ENCODE measurements at regions of chr17 and their contacts with region 1.

Region 1: GRCh38 chr17:63425482-63425881 is 20.6 kb downstream of the CYB561 start:
- DNase-seq: peak; percentile 58 to 67
- ATAC-seq: peak; percentile 79 to 97
- H3K4me3 ChIP-seq: no peak overlapping the region
- H3K27ac ChIP-seq: no peak overlapping the region
- H3K4me1 ChIP-seq: peaks cover 0 to 4% of the 10 kb centered on the region in 2 donors
- H3K27me3 ChIP-seq: no peaks in the 10 kb centered on the region
- CTCF ChIP-seq: peak; percentile 82 to 98 (median 91)
- POLR2A ChIP-seq: no peak

Region 2: GRCh38 chr17:61946359-61946758 is 1479.1 kb before region 1 on chr17:
- in situ Hi-C with region 1: no loop called
- intact Hi-C with region 1: no loop called
- DNase-seq: no peak
- ATAC-seq: no peak
- H3K4me3 ChIP-seq: no peak overlapping the region
- H3K27ac ChIP-seq: no peak overlapping the region
- H3K4me1 ChIP-seq: peaks cover 0 to 7% of the 10 kb centered on the region in 2 donors
- H3K27me3 ChIP-seq: no peaks in the 10 kb centered on the region
- CTCF ChIP-seq: no peak
- POLR2A ChIP-seq: no peak

Region 3: GRCh38 chr17:62808196-62808930 is 617.1 kb before region 1 on chr17 and contains the start of gene MARCHF10:
- in situ Hi-C with region 1: no loop called
- intact Hi-C with region 1: no loop called
- DNase-seq: no peak
- ATAC-seq: no peak
- H3K4me3 ChIP-seq: no peak within 1 kb of the TSS
- H3K27ac ChIP-seq: no peak within 1 kb of the TSS
- H3K4me1 ChIP-seq: no peaks in the 10 kb centered on the region
- H3K27me3 ChIP-seq: peaks cover 7 to 18% (median 13%) of the 10 kb centered on the region in 3 donors
- CTCF ChIP-seq: no peak
- POLR2A ChIP-seq: no peak
- total RNA-seq, gene MARCHF10: not detected

Region 4: GRCh38 chr17:63222655-63223054 is 202.8 kb before region 1 on chr17:
- in situ Hi-C with region 1: no loop called
- intact Hi-C with region 1: no loop called
- DNase-seq: no peak
- ATAC-seq: no peak
- H3K4me3 ChIP-seq: no peak overlapping the region
- H3K27ac ChIP-seq: no peak overlapping the region
- H3K4me1 ChIP-seq: no peaks in the 10 kb centered on the region
- H3K27me3 ChIP-seq: no peaks in the 10 kb centered on the region
- CTCF ChIP-seq: no peak
- POLR2A ChIP-seq: no peak

Region 5: DNA sequence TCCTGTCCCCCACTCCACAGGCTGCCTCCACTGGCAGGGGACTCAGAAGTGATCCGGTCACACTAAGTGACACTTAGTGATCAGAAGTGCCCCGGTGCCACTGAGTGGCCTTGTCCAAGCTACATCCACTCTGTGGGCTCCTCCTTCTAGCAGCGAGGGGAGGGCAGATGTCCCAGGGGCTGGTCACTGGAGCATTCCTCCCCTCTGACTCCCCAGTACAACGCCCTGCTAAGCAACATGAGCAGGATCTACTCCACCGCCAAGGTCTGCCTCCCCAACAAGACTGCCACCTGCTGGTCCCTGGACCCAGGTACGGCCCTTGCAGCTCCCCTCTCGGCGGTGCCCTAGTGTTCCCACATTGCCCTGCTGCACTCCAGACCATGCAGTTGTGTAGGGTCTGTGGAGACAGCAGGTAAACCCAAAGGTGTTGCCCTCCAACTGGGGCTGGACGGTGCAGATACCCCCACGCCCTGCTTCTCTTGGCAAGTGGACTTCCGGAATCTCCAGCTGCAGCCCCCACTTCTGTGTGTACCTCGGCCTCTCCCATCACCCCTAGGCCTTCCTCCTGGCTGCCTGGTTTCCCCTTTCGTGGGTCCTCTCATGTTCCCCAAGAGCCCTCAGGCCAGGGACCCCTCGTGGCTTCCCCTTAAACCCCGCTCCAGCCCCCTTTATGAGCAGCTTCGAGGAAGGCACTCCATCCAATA is 53.5 kb after region 1 on chr17:
- in situ Hi-C with region 1: loop called in 3 of 4 experiments (anchors 10 kb)
- intact Hi-C with region 1: loop called (anchors 1 kb)
- DNase-seq: peak; percentile 47 to 56
- ATAC-seq: peak; percentile 63 to 64
- H3K4me3 ChIP-seq: no peak overlapping the region
- H3K27ac ChIP-seq: no peak overlapping the region
- H3K4me1 ChIP-seq: peaks cover 5 to 15% of the 10 kb centered on the region in 2 donors
- H3K27me3 ChIP-seq: peaks cover 11 to 32% (median 18%) of the 10 kb centered on the region in 3 donors
- CTCF ChIP-seq: peak; percentile 39 to 67 (median 64)
- POLR2A ChIP-seq: no peak

Region 6: GRCh38 chr17:63549946-63550807 is 124.7 kb after region 1 on chr17 and contains the start of gene DCAF7:
- in situ Hi-C with region 1: no loop called
- intact Hi-C with region 1: loop called (anchors 10 kb)
- DNase-seq: peak; percentile 100
- ATAC-seq: peak; percentile 98 to 99
- H3K4me3 ChIP-seq: peak within 1 kb of the TSS; percentile 91 to 97 (median 93)
- H3K27ac ChIP-seq: peak within 1 kb of the TSS; percentile 87 to 96 (median 94)
- H3K4me1 ChIP-seq: peaks cover 37 to 43% of the 10 kb centered on the region in 2 donors
- H3K27me3 ChIP-seq: no peaks in the 10 kb centered on the region
- CTCF ChIP-seq: no peak
- POLR2A ChIP-seq: peak; percentile 66 to 68
- total RNA-seq, gene DCAF7: 16.5 to 34.1 (median 22.0) TPM

Region 7: DNA sequence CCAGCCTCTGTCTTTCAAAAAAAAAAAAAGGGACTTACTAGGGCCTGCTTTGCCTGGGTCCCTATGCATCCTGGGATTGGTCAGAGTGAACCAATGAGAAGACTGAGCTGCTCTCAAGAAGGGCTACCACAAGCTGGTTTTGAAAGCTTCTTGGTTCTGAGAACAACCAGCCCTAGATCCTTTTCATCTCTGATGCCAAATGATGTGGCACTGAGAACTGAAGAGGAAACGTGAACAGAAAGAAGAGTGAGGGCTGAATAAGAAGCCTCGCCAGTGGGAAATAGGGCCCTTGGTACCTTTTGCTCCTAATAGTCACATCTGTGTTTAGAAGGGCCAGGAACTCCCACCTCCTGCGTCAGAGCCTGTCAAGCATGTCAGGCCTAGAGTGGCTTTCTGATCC is 185.9 kb after region 1 on chr17:
- in situ Hi-C with region 1: loop called (anchors 5 kb)
- intact Hi-C with region 1: loop called (anchors 1 kb)
- DNase-seq: no peak
- ATAC-seq: no peak
- H3K4me3 ChIP-seq: no peak overlapping the region
- H3K27ac ChIP-seq: no peak overlapping the region
- H3K4me1 ChIP-seq: no peaks in the 10 kb centered on the region
- H3K27me3 ChIP-seq: no peaks in the 10 kb centered on the region
- CTCF ChIP-seq: no peak
- POLR2A ChIP-seq: no peak

Region 8: DNA sequence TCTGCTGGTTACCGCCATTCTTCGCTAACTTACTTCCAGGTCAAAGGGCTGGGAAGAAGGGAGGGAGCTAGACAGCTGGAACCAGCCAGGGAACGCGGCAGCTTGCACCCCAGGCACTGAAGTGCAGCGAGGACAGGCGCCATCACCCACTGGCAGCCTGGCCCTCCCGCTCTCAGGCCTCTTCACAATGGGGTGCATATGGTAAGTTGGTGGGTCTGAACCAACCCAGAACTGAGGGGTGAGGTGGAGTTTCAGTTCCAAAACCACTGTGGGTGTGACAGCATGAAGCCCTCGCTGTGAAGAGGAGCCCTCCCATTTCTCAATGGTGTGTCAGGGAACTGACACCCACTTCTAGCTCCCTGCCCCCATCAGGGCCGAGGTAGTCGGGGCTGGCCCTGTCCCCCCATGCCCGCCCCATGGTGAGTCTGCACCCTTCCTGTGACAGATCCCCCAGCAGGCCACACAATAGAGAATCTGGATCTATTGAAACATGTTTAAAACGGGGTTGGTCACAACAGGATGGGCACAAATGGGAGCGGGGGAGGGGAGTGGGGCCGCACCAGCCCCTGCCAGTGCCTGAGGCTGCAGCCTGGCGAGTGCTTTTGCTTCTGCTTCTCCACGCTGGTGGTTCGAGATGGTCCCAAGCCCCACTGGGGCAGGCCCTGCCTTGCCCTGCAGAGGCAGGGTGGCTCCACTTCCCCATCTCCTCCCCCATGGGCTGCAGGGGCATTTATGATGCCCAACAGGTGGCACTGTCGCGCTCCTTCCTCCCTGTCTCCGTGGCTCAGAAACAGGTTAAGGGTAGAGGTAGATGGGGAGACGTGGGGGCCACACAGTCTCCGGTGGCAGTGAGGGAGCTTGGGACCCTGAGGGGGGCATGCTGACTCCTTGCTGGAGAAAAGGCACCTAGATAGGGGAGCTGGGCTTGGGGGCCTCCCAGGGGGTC is 272.1 kb after region 1 on chr17:
- in situ Hi-C with region 1: loop called in 1 of 4 experiments (anchors 25 kb)
- intact Hi-C with region 1: loop called (anchors 5 kb)
- DNase-seq: peak in 1 of 2 donors; percentile 52
- ATAC-seq: peak in 1 of 2 donors; percentile 47
- H3K4me3 ChIP-seq: no peak overlapping the region
- H3K27ac ChIP-seq: no peak overlapping the region
- H3K4me1 ChIP-seq: peaks cover 17 to 24% of the 10 kb centered on the region in 2 donors
- H3K27me3 ChIP-seq: peaks cover 5 to 20% (median 10%) of the 10 kb centered on the region in 3 donors
- CTCF ChIP-seq: peak in 4 of 5 experiments; percentile 29 to 62 (median 47)
- POLR2A ChIP-seq: no peak

Region 9: GRCh38 chr17:63859257-63859656 is 433.8 kb after region 1 on chr17:
- in situ Hi-C with region 1: no loop called
- intact Hi-C with region 1: loop called (anchors 10 kb)
- DNase-seq: no peak
- ATAC-seq: no peak
- H3K4me3 ChIP-seq: no peak overlapping the region
- H3K27ac ChIP-seq: no peak overlapping the region
- H3K4me1 ChIP-seq: no peaks in the 10 kb centered on the region
- H3K27me3 ChIP-seq: no peaks in the 10 kb centered on the region
- CTCF ChIP-seq: no peak
- POLR2A ChIP-seq: no peak

Measured in gastrocnemius medialis (tissue), 4 donors.